Naive thymus-derived CD4-positive, alpha-beta T cell (primary cell): ENCODE measurements at regions of chr4 and their contacts with region 1.

Region 1: GRCh38 chr4:159206427-159206871 is 103.6 kb downstream of the RAPGEF2 start:
- DNase-seq: peak in 3 of 9 donors; percentile 5 to 52 (median 8)
- ATAC-seq: peak; percentile 36
- H3K4me3 ChIP-seq: no peak overlapping the region
- H3K4me3 Mint-ChIP-seq: peak overlapping the region in 3 of 10 donors; percentile 6 to 70 (median 15)
- H3K27ac ChIP-seq: no peak overlapping the region
- H3K27ac Mint-ChIP-seq: peak overlapping the region in 4 of 9 donors; percentile 2 to 89 (median 16)
- H3K4me1 ChIP-seq: no peaks in the 10 kb centered on the region
- H3K4me1 Mint-ChIP-seq: peaks cover 9 to 41% (median 18%) of the 10 kb centered on the region in 7 donors
- H3K27me3 ChIP-seq: no peaks in the 10 kb centered on the region
- H3K27me3 Mint-ChIP-seq: no peaks in the 10 kb centered on the region

Region 2: DNA sequence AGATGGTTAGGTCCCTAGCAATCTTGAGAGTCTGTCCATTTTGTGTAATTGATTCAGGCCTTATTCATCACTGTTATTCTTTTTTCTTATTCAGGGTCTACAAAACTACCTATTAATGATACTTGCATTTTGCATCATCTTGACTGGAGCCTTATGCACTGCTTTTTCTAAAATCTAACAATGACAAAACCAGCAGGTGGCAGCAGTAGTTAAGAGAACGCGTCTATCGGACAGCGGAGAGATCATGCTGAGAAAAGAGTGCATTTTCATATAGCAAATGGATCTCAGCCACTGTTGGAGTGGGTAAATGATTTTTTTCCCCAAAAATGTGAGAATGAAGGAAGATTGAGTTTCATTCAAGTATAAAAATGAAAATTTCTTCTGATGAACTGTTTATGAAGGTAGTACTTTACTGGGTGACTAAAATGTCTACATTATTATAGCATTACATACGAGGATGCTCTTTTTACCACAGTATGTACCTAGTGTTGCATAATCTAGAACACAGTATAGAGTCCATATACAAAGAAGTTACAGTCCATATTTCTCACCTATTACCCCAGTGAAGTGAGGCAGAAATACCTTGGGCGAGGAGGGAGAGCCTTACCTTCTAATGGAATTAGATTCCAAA is 953.0 kb before region 1 on chr4:
- CTCF ChIA-PET with region 1: no interaction called
- POLR2A ChIA-PET with region 1: no interaction called
- intact Hi-C with region 1: loop called (anchors 1 to 10 kb)
- DNase-seq: peak in 7 of 9 donors; percentile 2 to 51 (median 26)
- ATAC-seq: peak; percentile 73
- H3K4me3 ChIP-seq: no peak overlapping the region
- H3K4me3 Mint-ChIP-seq: peak overlapping the region in 1 of 10 donors; percentile 19
- H3K27ac ChIP-seq: no peak overlapping the region
- H3K27ac Mint-ChIP-seq: no peak overlapping the region
- H3K4me1 ChIP-seq: no peaks in the 10 kb centered on the region
- H3K4me1 Mint-ChIP-seq: peaks cover 3 to 14% (median 12%) of the 10 kb centered on the region in 7 donors
- H3K27me3 ChIP-seq: peaks cover 0 to 5% of the 10 kb centered on the region in 2 donors
- H3K27me3 Mint-ChIP-seq: peaks cover 0 to 13% (median 9%) of the 10 kb centered on the region in 5 donors

Region 3: DNA sequence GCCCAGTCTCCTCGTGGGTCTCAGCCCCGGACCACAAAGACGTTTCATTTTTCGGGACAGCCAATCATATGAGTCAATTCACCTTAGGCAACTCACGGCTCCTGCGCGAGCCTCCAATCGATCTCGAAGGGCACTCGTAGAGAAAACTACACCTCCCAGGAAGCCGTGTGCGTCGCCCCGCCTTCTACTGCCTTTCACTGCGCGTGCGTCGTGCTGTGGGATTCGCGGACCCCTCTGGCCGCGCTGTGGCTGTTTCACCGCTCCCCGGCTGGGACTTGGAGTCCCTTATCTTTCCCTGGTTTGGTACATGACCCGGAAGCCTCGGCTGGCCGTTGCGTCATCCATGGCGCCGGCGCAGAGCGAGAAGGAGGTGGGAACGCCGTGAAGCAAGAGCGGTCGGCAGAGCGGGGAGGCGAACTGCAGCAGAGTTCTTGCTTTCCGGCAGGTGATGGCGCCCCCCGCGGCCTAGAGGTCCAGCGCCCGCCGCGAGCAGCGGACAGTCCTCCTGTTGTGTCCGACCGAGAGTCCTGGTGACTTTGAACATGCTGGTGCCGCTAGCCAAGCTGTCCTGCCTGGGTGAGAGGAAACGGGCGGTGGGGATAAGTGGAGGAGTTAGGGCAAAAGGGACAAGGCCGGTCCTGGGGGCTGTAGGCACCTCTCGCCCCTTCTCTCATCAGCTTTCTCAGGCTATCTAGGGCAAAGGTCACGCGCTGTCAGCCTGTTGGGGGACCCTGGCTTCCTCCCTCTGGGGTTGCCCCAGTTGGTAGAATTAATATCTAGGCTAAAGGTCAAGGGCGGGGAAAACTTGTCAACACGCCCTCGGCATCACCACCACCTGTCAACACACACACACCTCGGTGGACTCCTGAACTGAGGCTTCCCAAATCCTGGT is 534.3 kb before region 1 on chr4 and contains the start of gene ETFDH:
- CTCF ChIA-PET with region 1: interaction called, 4 read pairs
- POLR2A ChIA-PET with region 1: no interaction called
- intact Hi-C with region 1: loop called in 1 of 2 experiments (anchors 1 kb)
- DNase-seq: peak; percentile 91 to 99 (median 98)
- ATAC-seq: peak; percentile 88
- H3K4me3 ChIP-seq: peak within 1 kb of the TSS; percentile 80
- H3K4me3 Mint-ChIP-seq: peak within 1 kb of the TSS; percentile 88 to 99 (median 96)
- H3K27ac ChIP-seq: peak within 1 kb of the TSS; percentile 93
- H3K27ac Mint-ChIP-seq: peak within 1 kb of the TSS; percentile 91 to 99 (median 97)
- H3K4me1 ChIP-seq: peaks cover 13 to 16% of the 10 kb centered on the region in 2 donors
- H3K4me1 Mint-ChIP-seq: peaks cover 6 to 43% (median 35%) of the 10 kb centered on the region in 7 donors
- H3K27me3 ChIP-seq: no peaks in the 10 kb centered on the region
- H3K27me3 Mint-ChIP-seq: peaks cover 0 to 3% (median 0%) of the 10 kb centered on the region in 5 donors
- total RNA-seq, gene ETFDH: 12.5 to 25.8 (median 17.5) TPM

Region 4: GRCh38 chr4:158729716-158730559 is 476.5 kb before region 1 on chr4:
- CTCF ChIA-PET with region 1: no interaction called
- POLR2A ChIA-PET with region 1: no interaction called
- intact Hi-C with region 1: loop called (anchors 1 kb)
- DNase-seq: peak; percentile 18 to 57 (median 44)
- ATAC-seq: peak; percentile 93
- H3K4me3 ChIP-seq: no peak overlapping the region
- H3K4me3 Mint-ChIP-seq: no peak overlapping the region
- H3K27ac ChIP-seq: no peak overlapping the region
- H3K27ac Mint-ChIP-seq: no peak overlapping the region
- H3K4me1 ChIP-seq: no peaks in the 10 kb centered on the region
- H3K4me1 Mint-ChIP-seq: peaks cover 0 to 23% (median 0%) of the 10 kb centered on the region in 7 donors
- H3K27me3 ChIP-seq: no peaks in the 10 kb centered on the region
- H3K27me3 Mint-ChIP-seq: peaks cover 26 to 42% (median 32%) of the 10 kb centered on the region in 5 donors

Region 5: GRCh38 chr4:158856852-158857251 is 349.6 kb before region 1 on chr4:
- CTCF ChIA-PET with region 1: interaction called, 8 read pairs
- POLR2A ChIA-PET with region 1: no interaction called
- intact Hi-C with region 1: loop called (anchors 1 kb)
- DNase-seq: peak in 3 of 9 donors; percentile 3 to 16 (median 13)
- ATAC-seq: peak; percentile 79
- H3K4me3 ChIP-seq: no peak overlapping the region
- H3K4me3 Mint-ChIP-seq: no peak overlapping the region
- H3K27ac ChIP-seq: no peak overlapping the region
- H3K27ac Mint-ChIP-seq: no peak overlapping the region
- H3K4me1 ChIP-seq: no peaks in the 10 kb centered on the region
- H3K4me1 Mint-ChIP-seq: peaks cover 0 to 10% (median 0%) of the 10 kb centered on the region in 7 donors
- H3K27me3 ChIP-seq: no peaks in the 10 kb centered on the region
- H3K27me3 Mint-ChIP-seq: no peaks in the 10 kb centered on the region

Region 6: DNA sequence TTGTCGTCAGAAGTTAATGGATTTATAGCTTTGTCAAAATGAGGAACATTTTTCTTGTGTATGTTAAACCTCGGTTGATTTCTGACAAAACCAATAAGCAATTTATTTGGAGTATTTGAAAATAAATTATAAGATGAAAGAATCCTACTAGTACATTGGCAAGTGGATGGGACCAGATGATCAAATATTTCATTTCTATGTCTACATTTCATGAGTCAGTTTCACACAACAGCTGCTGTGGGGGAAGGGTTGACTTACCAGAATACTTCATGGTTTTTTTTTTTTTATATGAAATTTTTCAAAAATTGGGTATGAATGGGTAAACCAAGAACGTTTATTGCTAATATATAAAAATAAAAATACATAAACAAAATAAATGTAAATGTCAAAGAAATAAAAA is 64.2 kb before region 1 on chr4:
- CTCF ChIA-PET with region 1: no interaction called
- POLR2A ChIA-PET with region 1: no interaction called
- intact Hi-C with region 1: no loop called
- DNase-seq: no peak
- ATAC-seq: no peak
- H3K4me3 ChIP-seq: no peak overlapping the region
- H3K4me3 Mint-ChIP-seq: no peak overlapping the region
- H3K27ac ChIP-seq: no peak overlapping the region
- H3K27ac Mint-ChIP-seq: no peak overlapping the region
- H3K4me1 ChIP-seq: no peaks in the 10 kb centered on the region
- H3K4me1 Mint-ChIP-seq: peaks cover 0 to 12% (median 8%) of the 10 kb centered on the region in 7 donors
- H3K27me3 ChIP-seq: no peaks in the 10 kb centered on the region
- H3K27me3 Mint-ChIP-seq: no peaks in the 10 kb centered on the region

Region 7: DNA sequence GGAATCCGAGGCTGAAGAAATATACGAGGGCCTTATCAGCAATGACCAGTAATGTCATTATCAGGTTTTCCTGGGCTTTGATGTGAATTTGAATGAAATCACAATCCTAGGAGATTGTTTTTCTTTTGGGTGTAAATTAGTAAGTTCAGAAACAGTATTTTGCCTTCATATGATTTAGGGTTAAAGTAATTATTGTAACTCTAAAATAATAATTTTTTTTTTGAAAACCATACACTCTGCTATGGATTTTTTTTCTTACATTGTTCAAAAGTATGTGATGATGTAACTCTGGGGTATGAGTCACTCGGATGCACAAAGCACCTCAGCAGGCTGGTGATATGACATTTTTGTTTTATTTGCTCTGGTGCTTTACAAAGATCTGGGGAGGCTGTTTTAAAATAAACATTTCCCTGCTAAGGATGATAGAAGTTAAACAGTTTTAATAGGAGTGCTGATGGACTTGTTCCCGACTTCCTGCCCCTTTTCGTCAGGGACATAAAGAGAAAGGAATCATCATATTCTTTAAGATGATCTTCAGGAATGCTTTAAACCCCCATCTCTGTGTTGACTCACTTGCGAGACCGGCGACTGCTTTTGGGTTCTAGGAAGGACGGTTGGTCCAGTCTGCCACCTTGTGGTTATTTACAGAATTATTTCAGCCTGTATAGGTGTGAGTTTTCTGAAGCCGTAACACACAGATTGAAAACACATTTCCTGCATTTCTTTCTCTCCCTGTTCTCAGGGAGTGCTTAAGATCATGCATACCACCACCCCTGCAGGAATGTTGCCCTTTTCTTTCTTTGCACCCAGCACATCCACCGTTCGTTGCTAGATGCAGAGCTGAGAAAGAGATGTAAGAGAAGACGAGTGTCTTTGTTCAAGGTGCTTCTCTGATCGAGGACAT is 31.1 kb before region 1 on chr4:
- CTCF ChIA-PET with region 1: no interaction called
- POLR2A ChIA-PET with region 1: no interaction called
- intact Hi-C with region 1: loop called (anchors 1 to 2 kb)
- DNase-seq: peak; percentile 9 to 76 (median 69)
- ATAC-seq: peak; percentile 91
- H3K4me3 ChIP-seq: no peak overlapping the region
- H3K4me3 Mint-ChIP-seq: peak overlapping the region in 3 of 10 donors; percentile 0 to 45 (median 24)
- H3K27ac ChIP-seq: no peak overlapping the region
- H3K27ac Mint-ChIP-seq: peak overlapping the region in 2 of 9 donors; percentile 6 to 76
- H3K4me1 ChIP-seq: peaks cover 0 to 4% of the 10 kb centered on the region in 2 donors
- H3K4me1 Mint-ChIP-seq: peaks cover 13 to 63% (median 31%) of the 10 kb centered on the region in 7 donors
- H3K27me3 ChIP-seq: no peaks in the 10 kb centered on the region
- H3K27me3 Mint-ChIP-seq: peaks cover 0 to 8% (median 0%) of the 10 kb centered on the region in 5 donors

Region 8: GRCh38 chr4:159366966-159367780 is 160.7 kb after region 1 on chr4:
- CTCF ChIA-PET with region 1: no interaction called
- POLR2A ChIA-PET with region 1: no interaction called
- intact Hi-C with region 1: no loop called
- DNase-seq: no peak
- ATAC-seq: no peak
- H3K4me3 ChIP-seq: no peak overlapping the region
- H3K4me3 Mint-ChIP-seq: peak overlapping the region in 1 of 10 donors; percentile 42
- H3K27ac ChIP-seq: no peak overlapping the region
- H3K27ac Mint-ChIP-seq: no peak overlapping the region
- H3K4me1 ChIP-seq: no peaks in the 10 kb centered on the region
- H3K4me1 Mint-ChIP-seq: peaks cover 0 to 6% (median 0%) of the 10 kb centered on the region in 7 donors
- H3K27me3 ChIP-seq: no peaks in the 10 kb centered on the region
- H3K27me3 Mint-ChIP-seq: peaks cover 9 to 28% (median 22%) of the 10 kb centered on the region in 5 donors